CD4-positive, alpha-beta memory T cell (primary cell): ENCODE measurements at regions of chr11 and their contacts with region 1.

Region 1: DNA sequence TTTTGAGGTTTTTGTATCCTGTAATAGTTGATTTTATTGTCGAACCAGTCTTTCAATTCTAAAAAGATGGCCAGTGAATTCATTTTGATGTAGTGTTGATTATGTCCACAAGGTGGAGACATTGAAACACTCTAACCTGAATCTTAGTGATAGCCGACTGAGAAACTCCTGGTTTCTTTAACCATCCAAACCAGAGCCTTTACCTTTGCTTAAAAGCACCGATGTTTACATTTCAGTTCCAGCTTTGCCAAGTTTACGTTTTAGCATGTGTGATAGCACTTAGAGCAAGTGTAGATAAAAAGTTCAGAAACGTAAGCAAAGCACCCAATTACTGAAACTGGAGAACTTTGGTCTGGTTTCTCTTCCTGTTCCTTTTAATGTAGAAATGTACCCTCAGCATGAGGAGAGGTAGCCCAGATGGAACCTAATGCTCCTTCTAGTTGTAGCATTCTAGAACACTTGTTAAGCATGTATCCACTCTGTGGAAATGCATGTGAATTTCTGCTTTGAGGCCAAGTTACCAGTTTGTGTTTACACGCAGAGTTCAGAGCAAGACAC is 208.6 kb downstream of the DBX1 start:
- DNase-seq: peak in 4 of 5 donors; percentile 8 to 25 (median 24)
- H3K4me3 ChIP-seq: no peak overlapping the region
- H3K4me3 Mint-ChIP-seq: peak overlapping the region; percentile 53 to 81 (median 66)
- H3K27ac ChIP-seq: no peak overlapping the region
- H3K27ac Mint-ChIP-seq: no peak overlapping the region
- H3K4me1 ChIP-seq: peaks cover 5% of the 10 kb centered on the region
- H3K4me1 Mint-ChIP-seq: peaks cover 6 to 12% (median 7%) of the 10 kb centered on the region in 4 donors
- H3K27me3 ChIP-seq: no peaks in the 10 kb centered on the region
- H3K27me3 Mint-ChIP-seq: peaks cover 2 to 7% of the 10 kb centered on the region in 2 donors

Region 2: DNA sequence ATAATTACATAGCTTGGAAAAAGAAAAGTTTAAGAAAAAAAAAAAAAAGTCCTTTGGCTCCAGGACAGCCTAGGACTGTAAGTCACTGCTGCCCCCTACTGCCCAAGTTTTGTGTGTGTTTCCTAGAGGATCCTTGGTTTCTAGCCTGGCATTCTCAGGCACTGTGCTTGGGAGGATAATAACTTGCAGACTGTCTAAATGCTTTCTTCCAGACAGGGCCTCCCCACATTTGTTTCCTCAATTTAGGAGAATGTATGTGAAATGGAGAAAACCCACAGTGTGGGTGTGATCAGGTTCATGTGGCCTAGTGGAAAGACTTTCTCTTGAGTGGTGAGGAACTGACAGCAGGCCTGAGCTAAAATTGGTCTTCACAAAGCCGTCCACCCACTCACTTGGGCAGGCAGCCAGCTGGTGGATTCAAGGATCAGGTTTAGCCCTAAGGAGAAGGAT is 48.0 kb before region 1 on chr11:
- CTCF ChIA-PET with region 1: no interaction called
- POLR2A ChIA-PET with region 1: no interaction called
- intact Hi-C with region 1: no loop called
- DNase-seq: peak in 4 of 5 donors; percentile 8 to 27 (median 19)
- H3K4me3 ChIP-seq: no peak overlapping the region
- H3K4me3 Mint-ChIP-seq: no peak overlapping the region
- H3K27ac ChIP-seq: no peak overlapping the region
- H3K27ac Mint-ChIP-seq: no peak overlapping the region
- H3K4me1 ChIP-seq: no peaks in the 10 kb centered on the region
- H3K4me1 Mint-ChIP-seq: no peaks in the 10 kb centered on the region
- H3K27me3 ChIP-seq: no peaks in the 10 kb centered on the region
- H3K27me3 Mint-ChIP-seq: peaks cover 0 to 2% of the 10 kb centered on the region in 2 donors

Region 3: GRCh38 chr11:19934828-19935259 is 16.8 kb before region 1 on chr11:
- CTCF ChIA-PET with region 1: interaction called, 15 read pairs
- POLR2A ChIA-PET with region 1: no interaction called
- intact Hi-C with region 1: no loop called
- DNase-seq: no peak
- H3K4me3 ChIP-seq: no peak overlapping the region
- H3K4me3 Mint-ChIP-seq: no peak overlapping the region
- H3K27ac ChIP-seq: no peak overlapping the region
- H3K27ac Mint-ChIP-seq: no peak overlapping the region
- H3K4me1 ChIP-seq: no peaks in the 10 kb centered on the region
- H3K4me1 Mint-ChIP-seq: peaks cover 0 to 3% (median 0%) of the 10 kb centered on the region in 4 donors
- H3K27me3 ChIP-seq: no peaks in the 10 kb centered on the region
- H3K27me3 Mint-ChIP-seq: no peaks in the 10 kb centered on the region

Region 4: DNA sequence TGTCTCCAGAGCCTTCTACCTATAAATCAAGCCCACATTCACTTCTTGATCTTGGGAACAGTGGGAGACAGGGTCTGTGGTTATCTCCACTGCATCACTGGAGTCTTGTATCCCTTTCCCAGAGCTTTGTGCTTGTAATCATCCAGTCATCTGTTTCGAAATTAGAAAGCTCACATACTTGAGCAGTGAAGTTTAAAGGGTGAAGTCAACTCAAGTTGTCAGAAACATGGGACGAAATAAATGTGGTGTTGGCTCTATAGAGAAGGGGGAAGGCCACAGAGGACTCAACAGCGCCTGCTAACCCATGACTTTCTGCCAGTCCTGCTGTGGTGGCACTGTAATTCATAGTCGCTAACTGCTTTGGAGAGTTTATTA is 11.2 kb after region 1 on chr11:
- CTCF ChIA-PET with region 1: interaction called, 35 read pairs
- POLR2A ChIA-PET with region 1: interaction called, 3 read pairs
- intact Hi-C with region 1: no loop called
- DNase-seq: no peak
- H3K4me3 ChIP-seq: no peak overlapping the region
- H3K4me3 Mint-ChIP-seq: no peak overlapping the region
- H3K27ac ChIP-seq: no peak overlapping the region
- H3K27ac Mint-ChIP-seq: no peak overlapping the region
- H3K4me1 ChIP-seq: peaks cover 8% of the 10 kb centered on the region
- H3K4me1 Mint-ChIP-seq: peaks cover 8 to 15% (median 10%) of the 10 kb centered on the region in 4 donors
- H3K27me3 ChIP-seq: no peaks in the 10 kb centered on the region
- H3K27me3 Mint-ChIP-seq: peaks cover 1 to 2% of the 10 kb centered on the region in 2 donors

Region 5: DNA sequence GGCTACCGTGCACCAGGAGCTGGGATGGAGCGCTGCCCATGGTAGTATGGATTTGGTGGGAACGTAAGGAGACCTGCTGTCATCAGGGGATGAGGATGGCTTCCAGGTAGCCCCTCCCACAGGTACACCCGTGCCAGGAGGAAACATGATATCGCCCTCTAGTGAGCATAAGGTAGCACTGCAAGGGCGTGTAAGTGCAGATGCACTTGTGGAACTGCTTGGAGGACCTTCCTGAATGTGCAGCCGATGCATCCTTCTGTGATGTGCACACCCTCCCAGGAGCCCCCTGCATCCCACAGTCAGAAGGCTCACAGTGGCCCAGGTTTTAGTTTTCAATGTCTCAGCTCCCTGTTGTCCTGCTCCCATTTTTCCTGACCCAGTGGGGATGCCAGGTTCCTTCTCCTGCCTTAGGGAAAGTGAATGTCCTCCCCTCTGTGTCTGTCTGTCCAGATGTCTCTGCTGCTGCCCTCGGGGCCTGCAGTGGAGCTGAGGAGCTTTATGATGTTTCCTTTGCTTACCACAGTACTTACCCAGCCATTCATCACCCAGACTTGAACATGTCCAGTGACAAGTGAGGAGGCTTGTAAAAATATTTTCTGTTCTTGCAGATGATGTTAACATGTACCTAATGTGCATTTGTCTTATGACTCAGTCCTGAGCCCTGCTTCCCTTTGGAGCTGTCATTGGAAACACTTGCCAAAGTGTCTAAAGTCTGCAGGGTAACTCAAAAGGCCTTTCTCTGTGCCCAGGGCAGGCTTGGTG is 159.5 kb after region 1 on chr11:
- CTCF ChIA-PET with region 1: interaction called, 3 read pairs
- POLR2A ChIA-PET with region 1: no interaction called
- intact Hi-C with region 1: loop called (anchors 10 kb)
- DNase-seq: peak in 4 of 5 donors; percentile 19 to 33 (median 30)
- H3K4me3 ChIP-seq: no peak overlapping the region
- H3K4me3 Mint-ChIP-seq: no peak overlapping the region
- H3K27ac ChIP-seq: no peak overlapping the region
- H3K27ac Mint-ChIP-seq: no peak overlapping the region
- H3K4me1 ChIP-seq: no peaks in the 10 kb centered on the region
- H3K4me1 Mint-ChIP-seq: peaks cover 0 to 6% (median under 1%) of the 10 kb centered on the region in 4 donors
- H3K27me3 ChIP-seq: no peaks in the 10 kb centered on the region
- H3K27me3 Mint-ChIP-seq: peaks cover 0 to 2% of the 10 kb centered on the region in 2 donors